SK-N-SH (cell line): ENCODE measurements at regions of chr2 and their contacts with region 1.

Region 1: DNA sequence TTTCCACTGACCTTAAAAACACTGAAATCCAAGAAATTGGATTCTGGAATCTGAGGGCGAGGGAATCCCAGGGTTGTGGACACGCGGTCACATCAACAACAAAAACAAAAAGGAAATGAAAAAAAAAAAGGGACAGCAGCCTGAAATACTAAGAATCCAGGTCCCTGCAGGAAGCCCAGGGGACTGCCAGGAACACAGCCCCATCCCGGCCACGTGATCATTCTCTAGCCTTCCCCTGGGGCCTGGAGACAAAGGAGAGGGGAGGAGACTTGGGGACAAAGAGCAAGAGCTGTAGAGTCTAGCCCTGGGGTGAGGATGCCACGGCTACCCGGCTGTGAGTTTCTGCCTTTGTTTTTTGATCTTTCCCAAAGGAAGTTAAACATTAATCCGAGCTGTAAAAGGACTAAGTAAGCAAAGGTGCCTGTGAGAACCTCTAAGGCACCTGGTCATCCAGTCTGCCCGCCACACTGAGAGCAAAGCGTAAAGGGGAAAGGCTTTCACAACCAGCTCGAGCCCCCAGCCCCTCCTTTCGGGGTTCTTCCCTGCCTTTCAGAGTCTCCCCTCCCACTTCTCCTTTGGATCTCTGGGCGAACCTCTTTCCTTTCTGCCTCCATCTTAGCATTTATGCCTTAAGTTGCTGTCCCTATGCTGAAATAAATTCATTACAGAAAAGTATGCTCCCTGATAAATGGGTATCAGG is 57.9 kb upstream of the MSH2 start:
- DNase-seq: peak; percentile 95
- H3K4me3 ChIP-seq: peak overlapping the region; percentile 58 to 69
- H3K27ac ChIP-seq: peak overlapping the region; percentile 93 to 99
- H3K4me1 ChIP-seq: peaks cover 5 to 21% of the 10 kb centered on the region in 2 experiments; a peak in 3 of 4 replicates
- H3K27me3 ChIP-seq: no peaks in the 10 kb centered on the region
- CTCF ChIP-seq: peak; percentile 36; the same call in 1 of the 2 replicates
- EP300 ChIP-seq: peak in 1 of 2 experiments; percentile 73; a peak in 2 of 4 replicates
- RAD21 ChIP-seq: no peak

Region 2: DNA sequence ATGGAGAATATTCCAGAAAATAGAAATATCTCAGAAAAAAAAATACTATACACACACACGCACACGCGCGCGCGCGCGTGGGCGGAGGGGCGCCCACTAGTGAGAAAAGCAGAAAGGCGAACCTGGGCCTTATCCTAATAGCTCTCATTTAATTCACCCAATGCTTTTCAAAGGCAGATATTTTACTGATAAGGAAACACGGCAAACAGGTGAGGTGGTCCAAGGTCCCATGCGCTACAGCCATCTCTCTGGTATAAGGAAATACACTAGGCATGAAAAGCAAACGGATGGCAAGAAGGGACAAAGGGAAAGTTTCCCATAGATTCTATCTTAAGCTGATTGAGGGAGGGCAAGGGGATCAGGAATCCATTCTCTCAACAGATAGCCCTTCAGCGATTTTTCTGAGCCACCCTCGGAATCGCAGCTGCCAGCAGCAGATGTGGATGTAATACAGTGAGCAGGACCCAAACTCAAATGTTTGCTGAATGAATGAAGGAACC is 729.0 kb before region 1 on chr2:
- CTCF ChIA-PET with region 1: no interaction called
- POLR2A ChIA-PET with region 1: no interaction called
- DNase-seq: no peak
- H3K4me3 ChIP-seq: peak overlapping the region; percentile 97 to 100
- H3K27ac ChIP-seq: peak overlapping the region; percentile 80 to 96
- H3K4me1 ChIP-seq: peaks cover 20 to 22% of the 10 kb centered on the region in 2 experiments; a peak in 3 of 4 replicates
- H3K27me3 ChIP-seq: no peaks in the 10 kb centered on the region
- CTCF ChIP-seq: peak; percentile 55
- EP300 ChIP-seq: no peak
- RAD21 ChIP-seq: no peak

Region 3: DNA sequence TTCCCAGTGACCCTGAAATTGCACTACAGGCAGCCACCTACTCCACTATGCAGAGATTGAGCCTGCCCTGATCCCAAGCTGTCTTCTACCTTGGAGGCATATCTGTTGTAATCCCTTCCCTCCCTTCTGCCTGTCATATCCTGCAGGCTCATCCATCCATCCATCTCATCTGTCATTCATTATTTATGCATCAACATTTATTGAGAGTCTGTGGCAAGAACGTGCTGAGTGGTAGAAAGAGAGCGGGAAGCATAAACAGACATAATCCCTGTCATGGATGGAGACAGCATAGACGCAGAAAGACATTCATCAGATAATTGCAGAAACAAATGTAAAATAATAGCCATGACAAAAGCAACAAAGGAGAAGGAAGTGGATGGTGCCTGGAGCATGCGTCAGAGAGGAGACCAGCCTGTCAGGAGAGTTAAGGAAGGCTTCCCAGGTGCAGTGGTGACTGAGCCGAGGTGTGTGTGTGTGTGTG is 79.2 kb before region 1 on chr2:
- CTCF ChIA-PET with region 1: no interaction called
- POLR2A ChIA-PET with region 1: no interaction called
- DNase-seq: peak; percentile 60
- H3K4me3 ChIP-seq: no peak overlapping the region
- H3K27ac ChIP-seq: peak overlapping the region in 1 of 2 experiments; percentile 5; a peak in 2 of 4 replicates
- H3K4me1 ChIP-seq: peaks cover 10 to 26% of the 10 kb centered on the region in 2 experiments; a peak in 3 of 4 replicates
- H3K27me3 ChIP-seq: no peaks in the 10 kb centered on the region
- CTCF ChIP-seq: no peak
- EP300 ChIP-seq: no peak; a peak in 1 of 4 replicates
- RAD21 ChIP-seq: no peak

Region 4: DNA sequence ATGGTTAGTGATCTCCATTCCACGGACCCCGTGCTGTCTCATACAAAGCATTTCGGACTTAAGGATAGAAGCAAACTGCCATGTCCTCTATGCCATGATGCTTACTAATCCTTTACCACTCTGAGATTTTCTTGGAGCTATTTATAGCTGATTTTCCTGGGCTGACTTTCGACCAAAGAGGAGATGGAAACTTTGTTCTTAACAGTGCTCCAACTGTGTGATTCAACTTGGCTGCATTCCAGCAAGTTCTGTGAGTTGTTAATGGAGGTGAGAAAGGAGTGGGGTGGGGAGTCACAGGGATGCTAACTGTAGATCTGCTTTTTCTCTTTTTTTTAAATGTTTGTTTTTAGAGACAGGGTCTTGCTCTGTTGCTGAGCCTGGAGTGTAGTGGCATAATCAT is 12.4 kb after region 1 on chr2:
- CTCF ChIA-PET with region 1: interaction called, 3 read pairs
- POLR2A ChIA-PET with region 1: interaction called, 10 read pairs
- DNase-seq: no peak
- H3K4me3 ChIP-seq: no peak overlapping the region
- H3K27ac ChIP-seq: peak overlapping the region in 1 of 2 experiments; percentile 69; a peak in 2 of 4 replicates
- H3K4me1 ChIP-seq: peaks cover 0 to 34% of the 10 kb centered on the region in 2 experiments; a peak in 2 of 4 replicates
- H3K27me3 ChIP-seq: no peaks in the 10 kb centered on the region
- CTCF ChIP-seq: no peak
- EP300 ChIP-seq: no peak
- RAD21 ChIP-seq: no peak

Region 5: DNA sequence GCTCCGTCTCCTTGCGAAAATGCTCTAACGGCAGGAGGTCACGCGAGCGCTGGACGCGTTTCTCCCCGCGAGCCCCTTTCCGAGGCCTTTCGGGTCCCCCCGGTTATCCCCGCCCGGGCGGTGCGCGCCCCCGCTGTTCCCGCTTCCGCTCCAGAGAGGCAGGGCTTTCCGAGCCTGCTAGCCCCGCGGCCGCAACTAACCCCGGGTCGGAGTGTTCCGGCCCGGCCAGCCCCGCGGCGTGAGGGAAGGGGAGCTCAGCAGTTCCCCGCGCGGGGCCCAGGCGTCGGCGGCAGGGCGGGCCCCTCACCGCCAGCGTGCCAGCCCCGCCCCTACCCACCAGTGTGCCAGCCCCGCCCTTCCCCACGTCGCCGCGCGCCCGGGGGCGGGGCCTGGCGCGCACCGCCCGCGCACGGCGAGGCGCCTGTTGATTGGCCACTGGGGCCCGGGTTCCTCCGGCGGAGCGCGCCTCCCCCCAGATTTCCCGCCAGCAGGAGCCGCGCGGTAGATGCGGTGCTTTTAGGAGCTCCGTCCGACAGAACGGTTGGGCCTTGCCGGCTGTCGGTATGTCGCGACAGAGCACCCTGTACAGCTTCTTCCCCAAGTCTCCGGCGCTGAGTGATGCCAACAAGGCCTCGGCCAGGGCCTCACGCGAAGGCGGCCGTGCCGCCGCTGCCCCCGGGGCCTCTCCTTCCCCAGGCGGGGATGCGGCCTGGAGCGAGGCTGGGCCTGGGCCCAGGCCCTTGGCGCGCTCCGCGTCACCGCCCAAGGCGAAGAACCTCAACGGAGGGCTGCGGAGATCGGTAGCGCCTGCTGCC is 437.8 kb after region 1 on chr2 and contains the start of gene MSH6:
- CTCF ChIA-PET with region 1: no interaction called
- POLR2A ChIA-PET with region 1: interaction called, 10 read pairs
- DNase-seq: peak; percentile 100
- H3K4me3 ChIP-seq: peak within 1 kb of the TSS; percentile 65 to 95
- H3K27ac ChIP-seq: peak within 1 kb of the TSS; percentile 89 to 94
- H3K4me1 ChIP-seq: peaks cover 2 to 13% of the 10 kb centered on the region in 2 experiments; a peak in 3 of 4 replicates
- H3K27me3 ChIP-seq: no peaks in the 10 kb centered on the region
- CTCF ChIP-seq: 0 out of 2 replicates have a peak, but pooled peaks have one; percentile 9
- EP300 ChIP-seq: peak; percentile 5 to 25; a peak in 2 of 4 replicates
- RAD21 ChIP-seq: no peak
- polyA plus RNA-seq, gene MSH6: 16.4 and 16.6 TPM in 2 replicates